Psoas muscle (tissue), 8 donors: ENCODE measurements at regions of chrX and their contacts with region 1.

Region 1: GRCh38 chrX:48676106-48676892 is 7.3 kb upstream of the WAS start:
- DNase-seq: peak; percentile 88 to 95
- ATAC-seq: peak; percentile 99
- H3K4me3 ChIP-seq: peak overlapping the region; percentile 85
- H3K27ac ChIP-seq: peak overlapping the region; percentile 88
- H3K4me1 ChIP-seq: no peaks in the 10 kb centered on the region
- H3K27me3 ChIP-seq: no peaks in the 10 kb centered on the region
- CTCF ChIP-seq: no peak

Region 2: GRCh38 chrX:48801280-48802088 is 125.2 kb after region 1 on chrX and contains the start of gene HDAC6:
- intact Hi-C with region 1: loop called in 1 of 2 experiments (anchors 10 kb)
- DNase-seq: peak; percentile 97 to 99
- ATAC-seq: peak; percentile 94 to 95 (median 95)
- H3K4me3 ChIP-seq: peak within 1 kb of the TSS; percentile 82
- H3K27ac ChIP-seq: peak within 1 kb of the TSS; percentile 95
- H3K4me1 ChIP-seq: no peaks in the 10 kb centered on the region
- H3K27me3 ChIP-seq: peaks cover 0 to 5% (median 0%) of the 10 kb centered on the region in 3 donors
- CTCF ChIP-seq: no peak
- total RNA-seq, gene HDAC6: 31.8 to 47.1 (median 43.6) TPM

Region 3: DNA sequence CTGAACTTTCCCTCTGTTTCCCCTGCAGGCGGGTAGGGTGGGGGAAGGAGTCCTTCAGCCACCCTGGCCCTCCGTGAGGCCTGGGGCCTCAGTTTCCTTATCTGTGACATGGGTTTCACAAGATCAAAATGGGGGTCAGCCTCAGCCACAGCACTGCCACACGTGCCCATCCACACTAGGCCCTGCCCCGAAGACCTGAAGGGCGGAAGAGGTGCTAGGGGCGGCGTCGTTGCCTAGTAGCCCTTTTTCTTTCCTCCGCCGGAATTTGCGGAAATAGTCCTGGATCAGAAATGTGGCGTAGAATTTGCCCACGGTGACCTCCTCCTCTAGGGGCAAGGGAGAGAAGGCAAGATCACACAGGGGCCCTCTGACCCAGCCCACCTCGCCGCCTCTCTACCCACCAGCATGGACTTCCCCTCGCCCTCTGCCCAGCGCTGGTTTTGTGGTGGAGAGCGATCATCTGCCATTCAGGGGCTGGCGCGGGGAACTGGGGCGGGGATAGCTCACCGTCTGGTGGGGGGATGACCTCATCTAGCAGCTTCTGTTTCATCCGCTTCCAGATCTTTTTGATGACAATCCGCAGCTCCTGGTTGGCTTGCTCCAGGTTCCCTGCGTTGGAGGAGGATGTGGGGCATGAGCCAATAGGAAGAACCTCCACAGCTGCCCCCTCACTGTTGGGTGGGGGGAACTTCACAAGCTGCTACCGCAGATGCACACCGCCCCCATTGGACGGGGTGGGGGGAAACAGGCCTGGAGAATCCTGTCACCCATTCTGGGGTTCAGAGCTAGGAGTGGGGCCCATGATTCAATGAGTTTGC is 533.3 kb after region 1 on chrX:
- intact Hi-C with region 1: no loop called
- DNase-seq: no peak
- ATAC-seq: no peak
- H3K4me3 ChIP-seq: no peak overlapping the region
- H3K27ac ChIP-seq: no peak overlapping the region
- H3K4me1 ChIP-seq: no peaks in the 10 kb centered on the region
- H3K27me3 ChIP-seq: peaks cover 0 to 19% (median 0%) of the 10 kb centered on the region in 3 donors
- CTCF ChIP-seq: no peak